SK-N-SH (cell line): ENCODE measurements at regions of chr11 and their contacts with region 1.

Region 1: DNA sequence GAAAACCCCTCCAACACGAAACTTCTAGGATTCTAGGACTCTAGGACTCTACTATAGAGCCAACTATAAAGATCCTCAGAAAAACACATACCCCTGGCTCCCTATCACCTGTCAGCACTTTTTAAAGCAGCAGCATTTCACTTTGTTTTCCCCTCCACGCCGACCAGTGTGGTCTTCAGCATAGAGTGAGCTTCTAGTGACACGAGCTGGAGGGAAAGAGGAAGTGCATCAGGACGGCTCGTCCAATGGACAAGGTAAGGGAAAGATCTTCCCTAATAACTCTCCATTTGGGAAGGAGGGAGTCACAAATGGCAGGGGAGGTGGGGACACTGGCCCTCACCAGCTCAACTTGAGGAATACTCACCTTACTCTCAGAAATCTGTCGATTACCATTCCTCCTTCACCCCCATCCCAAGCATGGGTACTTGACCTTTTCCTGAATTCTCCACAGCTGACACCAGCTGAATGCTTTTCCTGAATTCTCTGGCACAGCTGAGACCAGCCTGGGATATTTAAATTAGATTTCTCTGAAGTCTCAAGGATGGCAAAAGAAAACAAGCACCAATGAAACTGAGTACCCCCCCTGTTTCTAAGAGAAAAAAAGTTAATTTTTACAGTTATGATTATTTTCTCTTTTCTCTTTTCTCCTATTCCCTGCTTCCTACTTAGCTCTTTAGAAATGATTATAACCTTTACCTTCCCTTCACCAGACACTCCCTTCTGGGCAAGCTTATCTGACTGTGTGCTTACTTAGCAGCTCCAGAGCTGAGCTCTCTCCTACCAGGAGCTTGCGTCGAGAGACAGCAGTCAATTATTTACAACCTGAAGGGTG is 33.3 kb upstream of the NNMT start:
- DNase-seq: peak; percentile 75
- H3K4me3 ChIP-seq: peak overlapping the region in 1 of 2 experiments; percentile 27; a peak in 1 of 4 replicates
- H3K27ac ChIP-seq: no peak overlapping the region
- H3K4me1 ChIP-seq: no peaks in the 10 kb centered on the region; a peak in 1 of 4 replicates
- H3K27me3 ChIP-seq: peaks cover 14% of the 10 kb centered on the region; the same call in 1 of the 2 replicates
- CTCF ChIP-seq: peak; percentile 73
- EP300 ChIP-seq: no peak
- RAD21 ChIP-seq: peak; percentile 95

Region 2: DNA sequence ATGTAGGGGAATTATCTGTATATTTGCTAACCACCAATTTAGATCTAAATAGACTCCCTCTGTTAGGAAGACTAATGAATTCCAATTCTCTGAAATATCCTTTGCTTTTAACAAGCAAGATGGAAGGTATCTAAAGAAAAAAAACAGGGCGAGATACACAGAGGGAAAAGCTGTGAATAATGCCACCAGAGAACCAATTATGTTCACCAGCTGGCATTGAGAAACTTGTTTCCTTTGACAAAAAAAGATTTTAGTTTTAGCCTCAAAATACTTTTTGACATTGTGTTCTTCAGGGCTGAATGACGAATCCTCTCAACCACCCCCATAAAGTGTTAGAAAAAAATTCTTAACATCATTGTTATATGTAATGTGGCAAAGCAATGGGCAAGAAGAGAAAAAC is 339.3 kb before region 1 on chr11:
- CTCF ChIA-PET with region 1: interaction called, 11 read pairs
- POLR2A ChIA-PET with region 1: no interaction called
- DNase-seq: no peak
- H3K4me3 ChIP-seq: no peak overlapping the region
- H3K27ac ChIP-seq: no peak overlapping the region
- H3K4me1 ChIP-seq: no peaks in the 10 kb centered on the region
- H3K27me3 ChIP-seq: no peaks in the 10 kb centered on the region
- CTCF ChIP-seq: no peak
- EP300 ChIP-seq: no peak
- RAD21 ChIP-seq: no peak

Region 3: GRCh38 chr11:114001416-114001815 is 261.5 kb before region 1 on chr11:
- CTCF ChIA-PET with region 1: interaction called, 329 read pairs
- POLR2A ChIA-PET with region 1: interaction called, 3 read pairs
- DNase-seq: no peak
- H3K4me3 ChIP-seq: no peak overlapping the region
- H3K27ac ChIP-seq: no peak overlapping the region
- H3K4me1 ChIP-seq: no peaks in the 10 kb centered on the region
- H3K27me3 ChIP-seq: no peaks in the 10 kb centered on the region
- CTCF ChIP-seq: no peak
- EP300 ChIP-seq: no peak
- RAD21 ChIP-seq: no peak

Region 4: DNA sequence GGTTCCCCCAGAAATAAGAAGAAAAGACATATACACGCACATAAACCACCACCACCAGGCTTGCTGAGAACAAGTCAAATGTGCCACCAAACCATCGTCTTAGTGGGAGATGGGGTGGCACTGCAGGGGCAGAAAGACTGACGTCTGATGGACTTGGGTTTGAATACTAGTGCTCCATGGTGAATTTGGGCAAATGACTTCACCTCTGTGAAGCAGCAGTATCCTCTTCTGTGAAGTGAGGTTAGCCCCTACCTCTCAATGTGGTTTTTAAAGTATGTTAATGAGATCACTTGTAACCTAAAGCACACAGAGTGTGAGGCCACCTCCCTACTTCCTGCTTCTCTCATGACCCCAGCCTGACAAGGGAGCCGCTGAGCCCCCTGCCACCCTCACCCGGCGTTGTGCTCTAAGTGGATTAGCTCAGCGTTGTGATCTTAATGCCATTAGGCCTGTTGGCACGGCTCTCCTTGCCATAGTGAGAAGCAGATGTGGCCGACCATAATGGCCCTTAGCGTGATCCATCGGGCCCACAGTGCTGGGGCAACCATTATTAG is 189.0 kb before region 1 on chr11:
- CTCF ChIA-PET with region 1: interaction called, 18 read pairs
- POLR2A ChIA-PET with region 1: no interaction called
- DNase-seq: peak; percentile 61
- H3K4me3 ChIP-seq: no peak overlapping the region
- H3K27ac ChIP-seq: no peak overlapping the region
- H3K4me1 ChIP-seq: peaks cover 24 to 27% of the 10 kb centered on the region in 2 experiments; a peak in 3 of 4 replicates
- H3K27me3 ChIP-seq: peaks cover 56% of the 10 kb centered on the region
- CTCF ChIP-seq: no peak
- EP300 ChIP-seq: no peak
- RAD21 ChIP-seq: no peak

Region 5: DNA sequence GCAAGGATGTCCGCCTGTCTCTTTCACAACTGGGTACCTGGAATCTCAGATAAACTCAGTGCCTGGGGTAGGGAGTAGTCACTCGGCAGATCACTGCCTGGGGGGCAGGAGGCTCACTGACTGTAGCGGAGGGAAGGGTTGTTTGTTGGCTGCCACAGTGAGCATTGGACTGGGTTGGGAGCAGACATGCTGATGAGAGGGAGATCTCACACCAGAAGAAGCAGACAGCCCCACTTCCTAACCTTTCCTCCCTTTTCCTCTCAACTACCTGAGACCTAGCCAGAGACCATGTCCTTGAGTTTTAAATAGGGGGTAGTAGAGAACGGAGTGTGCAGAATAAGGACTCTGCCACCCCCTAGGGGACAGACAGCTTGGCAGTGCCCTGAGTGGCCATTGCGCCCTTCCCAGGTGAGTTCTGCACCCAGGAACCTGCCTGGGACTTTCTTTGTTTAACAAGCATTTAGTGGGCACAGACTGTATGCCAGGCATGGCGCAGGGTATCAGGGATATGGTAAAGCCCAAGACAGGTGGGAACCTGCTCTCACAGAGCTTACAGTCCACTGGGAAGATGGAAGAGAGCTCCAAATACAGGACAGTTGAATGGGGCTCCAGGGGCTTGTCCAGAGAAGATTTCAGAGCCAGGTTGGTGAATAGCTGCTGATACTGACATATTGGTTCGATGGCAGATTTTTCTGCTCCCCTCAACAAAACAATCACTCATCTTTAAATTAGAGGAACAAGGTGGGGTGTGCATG is 82.4 kb before region 1 on chr11:
- CTCF ChIA-PET with region 1: interaction called, 93 read pairs
- POLR2A ChIA-PET with region 1: no interaction called
- DNase-seq: peak; percentile 61
- H3K4me3 ChIP-seq: no peak overlapping the region
- H3K27ac ChIP-seq: no peak overlapping the region
- H3K4me1 ChIP-seq: no peaks in the 10 kb centered on the region
- H3K27me3 ChIP-seq: peaks cover 6% of the 10 kb centered on the region; the same call in 1 of the 2 replicates
- CTCF ChIP-seq: peak; percentile 43
- EP300 ChIP-seq: no peak
- RAD21 ChIP-seq: peak; percentile 73

Region 6: GRCh38 chr11:114243461-114244372 is 19.2 kb before region 1 on chr11:
- CTCF ChIA-PET with region 1: interaction called, 100 read pairs
- POLR2A ChIA-PET with region 1: no interaction called
- DNase-seq: no peak
- H3K4me3 ChIP-seq: no peak overlapping the region
- H3K27ac ChIP-seq: no peak overlapping the region
- H3K4me1 ChIP-seq: no peaks in the 10 kb centered on the region; a peak in 1 of 4 replicates
- H3K27me3 ChIP-seq: peaks cover 20% of the 10 kb centered on the region; the same call in 1 of the 2 replicates
- CTCF ChIP-seq: no peak
- EP300 ChIP-seq: no peak
- RAD21 ChIP-seq: no peak

Region 7: DNA sequence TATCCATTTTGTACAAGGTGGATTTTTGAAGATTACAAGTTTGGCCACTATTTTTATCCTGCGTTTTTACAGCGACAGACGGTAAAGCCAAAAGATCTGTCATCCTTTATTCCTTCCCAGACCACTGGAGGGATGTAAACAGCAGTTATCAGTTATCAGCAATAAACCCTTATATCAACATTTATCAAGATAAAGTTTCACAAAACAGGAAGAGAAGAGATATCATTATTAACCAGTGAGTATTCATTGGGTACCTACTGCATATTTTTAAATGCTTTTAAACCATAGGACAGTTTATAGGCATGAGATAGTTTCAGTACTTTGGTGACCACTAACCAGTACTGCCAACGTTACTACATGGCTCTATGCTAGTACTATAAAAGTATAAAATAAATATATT is 170.5 kb after region 1 on chr11:
- CTCF ChIA-PET with region 1: no interaction called
- POLR2A ChIA-PET with region 1: no interaction called
- DNase-seq: no peak
- H3K4me3 ChIP-seq: no peak overlapping the region
- H3K27ac ChIP-seq: no peak overlapping the region
- H3K4me1 ChIP-seq: no peaks in the 10 kb centered on the region
- H3K27me3 ChIP-seq: no peaks in the 10 kb centered on the region
- CTCF ChIP-seq: no peak
- EP300 ChIP-seq: no peak
- RAD21 ChIP-seq: no peak